ENCODE measurements at regions of chr4 and their contacts with region 1.

Region 1: GRCh38 chr4:55475394-55476243 is 71.1 kb downstream of the CLOCK start:
- DNase-seq: peak; percentile 73
- ATAC-seq: peak; percentile 75
- H3K4me3 ChIP-seq: no peak overlapping the region
- H3K27ac ChIP-seq: peak overlapping the region; percentile 33
- H3K4me1 ChIP-seq: peaks cover 35% of the 10 kb centered on the region
- H3K27me3 ChIP-seq: no peaks in the 10 kb centered on the region
- CTCF ChIP-seq: no peak

Region 2: DNA sequence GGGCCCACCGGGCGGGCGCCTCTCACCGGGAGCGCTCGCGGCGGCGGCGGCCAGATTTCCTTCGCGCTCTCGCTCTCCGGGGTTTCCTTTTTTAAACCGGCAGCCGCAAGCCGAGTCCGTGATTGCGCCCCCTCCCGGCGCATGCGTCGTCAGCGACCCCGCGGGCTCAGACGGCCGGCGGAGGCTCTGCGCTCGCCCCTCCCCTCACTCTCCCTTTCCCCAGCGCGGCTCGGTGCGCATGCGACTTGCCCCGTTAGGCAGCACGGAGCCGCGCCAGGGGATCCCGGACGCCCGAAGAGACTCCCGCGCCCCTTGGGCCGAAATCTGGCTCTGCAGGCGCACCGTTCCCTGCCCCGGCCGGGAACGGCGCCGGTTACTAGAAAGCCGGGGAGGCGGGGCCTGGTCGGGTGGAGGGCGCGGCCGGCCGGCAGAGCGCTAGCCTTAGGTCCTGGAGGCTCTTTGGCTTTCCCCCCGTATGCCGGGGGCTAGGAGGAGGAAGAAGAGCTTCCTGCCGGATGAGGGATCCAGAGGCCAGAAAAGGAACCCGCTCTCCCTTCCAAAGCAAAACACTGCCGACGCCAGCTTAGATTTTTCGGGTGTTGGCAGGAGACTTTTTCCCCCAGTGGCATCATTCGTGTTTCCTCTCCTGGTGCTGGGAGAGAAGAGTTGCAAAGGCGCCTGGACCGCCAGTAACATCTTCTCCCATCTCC is 71.3 kb after region 1 on chr4 and contains the start of gene CLOCK:
- CTCF ChIA-PET with region 1: no interaction called
- POLR2A ChIA-PET with region 1: no interaction called
- intact Hi-C with region 1: loop called (anchors 2 kb)
- DNase-seq: peak; percentile 87
- ATAC-seq: peak; percentile 49
- H3K4me3 ChIP-seq: peak within 1 kb of the TSS; percentile 86
- H3K27ac ChIP-seq: peak within 1 kb of the TSS; percentile 85
- H3K4me1 ChIP-seq: peaks cover 60% of the 10 kb centered on the region
- H3K27me3 ChIP-seq: no peaks in the 10 kb centered on the region
- CTCF ChIP-seq: peak; percentile 59
- total RNA-seq, gene CLOCK: 36.3 and 39.7 TPM in 2 replicates

Measured in PC-3 (cell line).